Activated CD8-positive, alpha-beta T cell treated with anti-CD3 and anti-CD28 coated beads for 36 hours (primary cell): ENCODE measurements at regions of chr1 and their contacts with region 1.

Region 1: GRCh38 chr1:229227298-229227919 is 43.5 kb upstream of the RAB4A start:
- DNase-seq: peak; percentile 85
- ATAC-seq: peak; percentile 80
- H3K4me3 Mint-ChIP-seq: no peak overlapping the region
- H3K27ac Mint-ChIP-seq: peak overlapping the region; percentile 12
- H3K4me1 Mint-ChIP-seq: peaks cover 14% of the 10 kb centered on the region
- H3K27me3 Mint-ChIP-seq: peaks cover 2% of the 10 kb centered on the region
- CTCF ChIP-seq: peak; percentile 98

Region 2: GRCh38 chr1:228655796-228656394 is 571.5 kb before region 1 on chr1:
- CTCF ChIA-PET with region 1: interaction called, 10 read pairs
- POLR2A ChIA-PET with region 1: no interaction called
- intact Hi-C with region 1: no loop called
- DNase-seq: no peak
- ATAC-seq: no peak
- H3K4me3 Mint-ChIP-seq: no peak overlapping the region
- H3K27ac Mint-ChIP-seq: no peak overlapping the region
- H3K4me1 Mint-ChIP-seq: no peaks in the 10 kb centered on the region
- H3K27me3 Mint-ChIP-seq: peaks cover 29% of the 10 kb centered on the region
- CTCF ChIP-seq: no peak

Region 3: DNA sequence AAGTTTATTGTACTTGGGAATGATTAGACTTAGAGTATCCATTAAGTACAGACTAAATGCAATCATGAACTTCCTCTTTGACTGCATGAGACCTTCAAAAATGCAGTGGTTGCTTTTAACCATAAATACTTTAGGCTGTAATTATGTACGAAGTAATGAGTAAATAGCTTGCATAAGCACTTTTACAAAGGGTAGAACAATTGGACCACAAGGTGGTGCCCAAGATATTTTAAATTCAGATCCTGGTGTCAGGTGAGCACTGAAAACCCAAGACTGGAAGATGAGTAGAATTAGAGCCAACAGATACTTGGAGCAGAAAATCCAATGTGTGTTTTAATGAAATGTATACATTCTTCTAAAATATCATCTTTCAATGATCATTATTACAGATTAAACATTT is 535.5 kb before region 1 on chr1:
- CTCF ChIA-PET with region 1: interaction called, 34 read pairs
- POLR2A ChIA-PET with region 1: no interaction called
- intact Hi-C with region 1: no loop called
- DNase-seq: peak; percentile 29
- ATAC-seq: no peak
- H3K4me3 Mint-ChIP-seq: no peak overlapping the region
- H3K27ac Mint-ChIP-seq: no peak overlapping the region
- H3K4me1 Mint-ChIP-seq: peaks cover 10% of the 10 kb centered on the region
- H3K27me3 Mint-ChIP-seq: peaks cover 3% of the 10 kb centered on the region
- CTCF ChIP-seq: peak; percentile 40

Region 4: GRCh38 chr1:228734881-228735801 is 492.3 kb before region 1 on chr1 and contains the start of gene RHOU:
- CTCF ChIA-PET with region 1: interaction called, 49 read pairs
- POLR2A ChIA-PET with region 1: no interaction called
- intact Hi-C with region 1: no loop called
- DNase-seq: peak; percentile 63
- ATAC-seq: peak; percentile 89
- H3K4me3 Mint-ChIP-seq: peak within 1 kb of the TSS; percentile 68
- H3K27ac Mint-ChIP-seq: no peak within 1 kb of the TSS
- H3K4me1 Mint-ChIP-seq: peaks cover 5% of the 10 kb centered on the region
- H3K27me3 Mint-ChIP-seq: peaks cover 10% of the 10 kb centered on the region
- CTCF ChIP-seq: peak; percentile 87
- total RNA-seq, gene RHOU: 1.2 TPM

Region 5: GRCh38 chr1:229238674-229239415 is 11.4 kb after region 1 on chr1:
- CTCF ChIA-PET with region 1: interaction called, 15 read pairs
- POLR2A ChIA-PET with region 1: interaction called, 4 read pairs
- intact Hi-C with region 1: no loop called
- DNase-seq: no peak
- ATAC-seq: no peak
- H3K4me3 Mint-ChIP-seq: no peak overlapping the region
- H3K27ac Mint-ChIP-seq: no peak overlapping the region
- H3K4me1 Mint-ChIP-seq: no peaks in the 10 kb centered on the region
- H3K27me3 Mint-ChIP-seq: peaks cover 1% of the 10 kb centered on the region
- CTCF ChIP-seq: no peak